ENCODE measurements at regions of chr17 and their contacts with region 1.

Region 1: GRCh38 chr17:28644985-28645939 is at the start of gene BLTP2:
- DNase-seq: peak; percentile 85
- ATAC-seq: peak; percentile 97
- H3K4me3 ChIP-seq: peak within 1 kb of the TSS; percentile 84 to 95 (median 92)
- H3K27ac ChIP-seq: peak within 1 kb of the TSS; percentile 68
- H3K4me1 ChIP-seq: peaks cover 54% of the 10 kb centered on the region
- H3K27me3 ChIP-seq: no peaks in the 10 kb centered on the region; a peak in 1 of 5 replicates
- CTCF ChIP-seq: peak; percentile 23; the same call in 1 of the 2 replicates
- EP300 ChIP-seq: no peak
- POLR2A ChIP-seq: peak; percentile 61 to 87
- RAD21 ChIP-seq: no peak; the same call in 1 of the 2 replicates
- total RNA-seq, gene BLTP2: 61.0 and 66.7 TPM in 2 replicates

Region 2: GRCh38 chr17:28484296-28484695 is 161.0 kb before region 1 on chr17:
- CTCF ChIA-PET with region 1: no interaction called
- POLR2A ChIA-PET with region 1: no interaction called
- in situ Hi-C with region 1: no loop called
- intact Hi-C with region 1: no loop called
- DNase-seq: no peak
- ATAC-seq: no peak
- H3K4me3 ChIP-seq: no peak overlapping the region
- H3K27ac ChIP-seq: no peak overlapping the region
- H3K4me1 ChIP-seq: peaks cover 77% of the 10 kb centered on the region
- H3K27me3 ChIP-seq: peaks cover 0 to 3% of the 10 kb centered on the region in 2 experiments; a peak in 2 of 5 replicates
- CTCF ChIP-seq: no peak
- EP300 ChIP-seq: no peak
- POLR2A ChIP-seq: no peak
- RAD21 ChIP-seq: no peak

Region 3: GRCh38 chr17:28623696-28624095 is 21.6 kb before region 1 on chr17:
- CTCF ChIA-PET with region 1: no interaction called
- POLR2A ChIA-PET with region 1: interaction called, 4 read pairs
- in situ Hi-C with region 1: no loop called
- intact Hi-C with region 1: loop called (anchors 1 kb)
- DNase-seq: no peak
- ATAC-seq: no peak
- H3K4me3 ChIP-seq: no peak overlapping the region
- H3K27ac ChIP-seq: no peak overlapping the region
- H3K4me1 ChIP-seq: peaks cover 5% of the 10 kb centered on the region; the same call in 1 of the 2 replicates
- H3K27me3 ChIP-seq: no peaks in the 10 kb centered on the region
- CTCF ChIP-seq: no peak
- EP300 ChIP-seq: no peak
- POLR2A ChIP-seq: no peak
- RAD21 ChIP-seq: no peak

Region 4: GRCh38 chr17:28661635-28662537 is 16.6 kb after region 1 on chr17 and contains the starts of genes SDF2 and SUPT6H:
- CTCF ChIA-PET with region 1: interaction called, 3 read pairs
- POLR2A ChIA-PET with region 1: interaction called, 69 read pairs
- in situ Hi-C with region 1: no loop called
- intact Hi-C with region 1: no loop called
- DNase-seq: peak; percentile 81
- ATAC-seq: peak; percentile 92
- H3K4me3 ChIP-seq: peak within 1 kb of the TSS; percentile 73 to 91 (median 88)
- H3K27ac ChIP-seq: peak within 1 kb of the TSS; percentile 91
- H3K4me1 ChIP-seq: peaks cover 52% of the 10 kb centered on the region
- H3K27me3 ChIP-seq: no peaks in the 10 kb centered on the region; a peak in 2 of 5 replicates
- CTCF ChIP-seq: no peak
- EP300 ChIP-seq: no peak
- POLR2A ChIP-seq: peak; percentile 73 to 81
- RAD21 ChIP-seq: no peak
- total RNA-seq, gene SDF2: 39.1 and 58.2 TPM in 2 replicates
- total RNA-seq, gene SUPT6H: 39.9 TPM in 2 replicates

Region 5: DNA sequence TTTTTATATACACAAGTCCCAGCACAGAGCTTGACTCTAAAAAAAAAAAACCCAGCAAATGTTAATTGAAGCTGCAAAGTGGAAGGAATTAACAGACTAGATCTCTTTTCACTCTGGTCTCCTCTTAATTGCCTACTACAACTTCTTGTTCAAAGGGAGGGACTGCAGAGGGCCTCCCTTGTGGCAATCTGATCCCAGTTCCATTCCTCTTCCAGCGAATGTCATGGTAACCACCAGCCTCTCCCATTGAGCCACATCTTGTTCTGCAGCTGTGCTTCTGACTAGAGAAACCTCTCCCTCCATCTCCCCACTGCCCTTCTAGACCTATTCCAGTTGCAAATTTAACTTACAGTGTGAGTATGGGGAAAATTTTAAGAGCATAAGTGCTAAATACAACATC is 22.6 kb after region 1 on chr17:
- CTCF ChIA-PET with region 1: no interaction called
- POLR2A ChIA-PET with region 1: interaction called, 69 read pairs
- in situ Hi-C with region 1: no loop called
- intact Hi-C with region 1: no loop called
- DNase-seq: no peak
- ATAC-seq: no peak
- H3K4me3 ChIP-seq: no peak overlapping the region
- H3K27ac ChIP-seq: no peak overlapping the region
- H3K4me1 ChIP-seq: peaks cover 32% of the 10 kb centered on the region
- H3K27me3 ChIP-seq: no peaks in the 10 kb centered on the region
- CTCF ChIP-seq: no peak
- EP300 ChIP-seq: no peak
- POLR2A ChIP-seq: no peak
- RAD21 ChIP-seq: no peak

Region 6: GRCh38 chr17:28675980-28676379 is 30.7 kb after region 1 on chr17:
- CTCF ChIA-PET with region 1: interaction called, 20 read pairs
- POLR2A ChIA-PET with region 1: interaction called, 5 read pairs
- in situ Hi-C with region 1: no loop called
- intact Hi-C with region 1: loop called (anchors 1 kb)
- DNase-seq: peak; percentile 30
- ATAC-seq: peak; percentile 81
- H3K4me3 ChIP-seq: no peak overlapping the region
- H3K27ac ChIP-seq: no peak overlapping the region
- H3K4me1 ChIP-seq: no peaks in the 10 kb centered on the region
- H3K27me3 ChIP-seq: no peaks in the 10 kb centered on the region
- CTCF ChIP-seq: peak; percentile 57
- EP300 ChIP-seq: no peak
- POLR2A ChIP-seq: no peak
- RAD21 ChIP-seq: peak; percentile 59

Region 7: GRCh38 chr17:28710861-28711722 is 65.8 kb after region 1 on chr17:
- CTCF ChIA-PET with region 1: no interaction called
- POLR2A ChIA-PET with region 1: interaction called, 22 read pairs
- in situ Hi-C with region 1: loop called (anchors 5 kb)
- intact Hi-C with region 1: no loop called
- DNase-seq: peak; percentile 86
- ATAC-seq: peak; percentile 91
- H3K4me3 ChIP-seq: peak overlapping the region; percentile 65 to 76 (median 67)
- H3K27ac ChIP-seq: peak overlapping the region; percentile 99
- H3K4me1 ChIP-seq: peaks cover 47% of the 10 kb centered on the region
- H3K27me3 ChIP-seq: peaks cover 0 to 2% of the 10 kb centered on the region in 2 experiments; a peak in 2 of 5 replicates
- CTCF ChIP-seq: no peak
- EP300 ChIP-seq: 0 out of 4 replicates have a peak, but pooled peaks of 1 of the 2 experiments have one; percentile 15
- POLR2A ChIP-seq: peak; percentile 92 to 97
- RAD21 ChIP-seq: peak; percentile 74; the same call in 1 of the 2 replicates

Region 8: DNA sequence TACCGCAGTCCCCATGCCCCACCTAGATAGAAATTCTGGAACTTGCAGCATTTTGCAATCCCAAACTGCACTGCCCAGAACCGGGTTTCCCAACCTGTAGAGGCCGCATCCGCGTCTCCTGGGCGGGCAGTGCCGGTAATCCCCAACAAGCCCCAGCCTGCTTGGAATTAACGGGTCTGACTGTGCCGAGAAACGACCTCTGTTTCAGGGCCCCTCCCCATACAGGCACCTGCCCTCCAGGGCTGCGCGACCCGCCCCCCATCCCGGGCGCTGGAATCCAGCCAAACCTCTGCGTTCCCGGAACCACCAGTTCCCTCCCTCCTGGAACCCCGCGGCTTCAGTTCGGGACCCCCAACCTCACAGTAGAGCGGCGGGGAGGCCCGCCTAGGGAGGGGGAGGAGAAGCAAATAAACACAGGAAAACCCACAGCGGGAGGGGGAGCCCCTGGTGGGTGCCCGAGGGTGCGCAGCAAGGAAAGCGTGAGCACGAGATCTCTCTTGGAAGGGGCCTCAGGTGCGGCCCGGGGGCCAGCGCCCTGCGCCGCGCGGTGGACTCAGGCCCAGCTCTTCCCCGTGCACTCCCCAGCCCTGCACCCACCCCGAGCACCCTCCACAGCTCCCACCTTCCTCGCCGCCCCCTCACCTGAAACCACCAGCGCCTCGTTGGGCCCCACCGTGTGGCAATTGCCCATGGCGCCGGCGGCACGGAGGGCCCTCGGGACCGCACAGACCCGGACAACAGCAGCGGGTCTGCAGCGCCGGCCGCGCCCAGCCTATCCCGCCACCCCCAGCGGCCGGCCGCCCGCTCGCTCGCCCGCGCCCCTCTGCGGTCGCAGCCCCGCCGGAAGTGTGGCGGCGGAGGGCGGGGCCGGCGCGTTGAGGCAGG is 251.9 kb after region 1 on chr17 and contains the start of gene FLOT2:
- CTCF ChIA-PET with region 1: no interaction called
- POLR2A ChIA-PET with region 1: no interaction called
- in situ Hi-C with region 1: loop called (anchors 25 kb)
- intact Hi-C with region 1: no loop called
- DNase-seq: peak; percentile 54
- ATAC-seq: peak; percentile 86
- H3K4me3 ChIP-seq: peak within 1 kb of the TSS; percentile 76 to 93 (median 89)
- H3K27ac ChIP-seq: peak within 1 kb of the TSS; percentile 84
- H3K4me1 ChIP-seq: peaks cover 53% of the 10 kb centered on the region
- H3K27me3 ChIP-seq: no peaks in the 10 kb centered on the region; a peak in 1 of 5 replicates
- CTCF ChIP-seq: peak; percentile 50
- EP300 ChIP-seq: 0 out of 4 replicates have a peak, but pooled peaks of 1 of the 2 experiments have one; percentile 11
- POLR2A ChIP-seq: peak; percentile 40 to 83
- RAD21 ChIP-seq: peak; percentile 49; the same call in 1 of the 2 replicates
- total RNA-seq, gene FLOT2: 54.3 and 60.7 TPM in 2 replicates